Activated CD4-positive, alpha-beta T cell treated with anti-CD3 and anti-CD28 coated beads for 36 hours (primary cell): ENCODE measurements at regions of chr9 and their contacts with region 1.

Region 1: GRCh38 chr9:109119439-109120203 is at the start of gene TMEM245:
- DNase-seq: peak; percentile 97
- ATAC-seq: peak; percentile 91
- H3K4me3 Mint-ChIP-seq: peak within 1 kb of the TSS; percentile 94
- H3K27ac Mint-ChIP-seq: peak within 1 kb of the TSS; percentile 81
- H3K4me1 Mint-ChIP-seq: peaks cover 39% of the 10 kb centered on the region
- H3K27me3 Mint-ChIP-seq: no peaks in the 10 kb centered on the region
- total RNA-seq, gene TMEM245: 24.0 to 24.5 TPM

Region 2: DNA sequence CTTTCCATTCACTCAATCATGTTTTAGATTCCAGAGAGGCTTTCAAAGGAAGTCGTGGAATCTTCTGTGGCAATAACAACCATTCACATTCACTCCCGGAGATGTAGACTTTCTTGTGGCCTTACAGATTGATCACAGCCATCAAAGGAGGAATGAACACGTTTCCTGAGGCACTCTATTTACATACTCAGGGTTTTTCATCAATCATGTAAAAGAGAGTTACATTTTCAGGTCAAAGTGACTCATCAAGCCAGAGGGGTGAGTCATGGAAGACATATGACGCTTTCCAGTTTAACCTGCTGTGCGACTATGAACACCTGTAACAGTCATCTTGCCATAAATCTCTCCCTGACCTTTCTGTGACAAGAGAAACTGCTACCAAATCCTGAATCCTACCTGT is 1875.9 kb before region 1 on chr9:
- CTCF ChIA-PET with region 1: no interaction called
- POLR2A ChIA-PET with region 1: no interaction called
- intact Hi-C with region 1: loop called in 1 of 2 experiments (anchors 5 kb)
- DNase-seq: peak; percentile 74
- ATAC-seq: peak; percentile 92
- H3K4me3 Mint-ChIP-seq: no peak overlapping the region
- H3K27ac Mint-ChIP-seq: peak overlapping the region; percentile 84
- H3K4me1 Mint-ChIP-seq: peaks cover 32% of the 10 kb centered on the region
- H3K27me3 Mint-ChIP-seq: peaks cover 2% of the 10 kb centered on the region

Region 3: DNA sequence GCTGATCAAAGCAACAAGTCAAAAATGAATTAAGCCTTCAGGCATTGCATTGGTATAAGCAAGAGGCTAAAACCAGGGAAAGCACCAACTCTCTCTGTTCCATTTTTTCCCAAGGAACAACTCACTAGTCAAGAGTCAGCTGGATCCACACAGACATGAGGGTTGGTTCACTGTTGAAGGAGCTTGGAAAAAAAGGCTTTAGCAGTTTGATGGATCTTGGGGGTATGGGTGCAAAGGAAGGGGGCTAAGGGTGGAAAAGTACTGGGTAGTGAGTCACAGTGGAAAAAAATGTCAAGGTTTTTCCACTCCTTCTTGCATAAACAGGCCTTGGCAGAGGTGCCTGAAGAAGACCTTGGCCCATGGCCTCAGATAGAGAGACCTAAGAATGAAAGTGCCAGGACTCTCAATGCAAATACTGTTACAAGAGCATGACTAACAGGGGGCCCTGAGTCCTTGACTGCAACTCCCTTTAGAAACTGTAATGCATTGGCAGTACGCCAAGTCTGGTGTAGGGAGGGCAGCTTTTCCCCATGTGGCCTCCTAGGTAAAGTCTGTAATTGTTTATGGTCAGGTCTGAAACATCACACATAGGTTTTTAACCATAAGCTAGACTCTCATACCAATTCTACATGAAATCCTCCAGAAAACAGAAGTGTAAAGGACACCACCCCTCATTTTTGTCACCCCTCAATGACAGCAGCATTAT is 233.8 kb before region 1 on chr9:
- CTCF ChIA-PET with region 1: no interaction called
- POLR2A ChIA-PET with region 1: no interaction called
- intact Hi-C with region 1: loop called in 1 of 2 experiments (anchors 5 kb)
- DNase-seq: peak; percentile 81
- ATAC-seq: peak; percentile 100
- H3K4me3 Mint-ChIP-seq: peak overlapping the region; percentile 50
- H3K27ac Mint-ChIP-seq: peak overlapping the region; percentile 77
- H3K4me1 Mint-ChIP-seq: peaks cover 20% of the 10 kb centered on the region
- H3K27me3 Mint-ChIP-seq: no peaks in the 10 kb centered on the region

Region 4: GRCh38 chr9:109083813-109084405 is 35.7 kb before region 1 on chr9:
- CTCF ChIA-PET with region 1: interaction called, 4 read pairs
- POLR2A ChIA-PET with region 1: no interaction called
- intact Hi-C with region 1: loop called in 1 of 2 experiments (anchors 5 kb)
- DNase-seq: no peak
- ATAC-seq: no peak
- H3K4me3 Mint-ChIP-seq: no peak overlapping the region
- H3K27ac Mint-ChIP-seq: no peak overlapping the region
- H3K4me1 Mint-ChIP-seq: peaks cover 8% of the 10 kb centered on the region
- H3K27me3 Mint-ChIP-seq: no peaks in the 10 kb centered on the region

Region 5: GRCh38 chr9:109182940-109183798 is 63.5 kb after region 1 on chr9:
- CTCF ChIA-PET with region 1: no interaction called
- POLR2A ChIA-PET with region 1: interaction called, 4 read pairs
- intact Hi-C with region 1: loop called (anchors 1 to 5 kb)
- DNase-seq: peak; percentile 48
- ATAC-seq: no peak
- H3K4me3 Mint-ChIP-seq: no peak overlapping the region
- H3K27ac Mint-ChIP-seq: no peak overlapping the region
- H3K4me1 Mint-ChIP-seq: peaks cover 13% of the 10 kb centered on the region
- H3K27me3 Mint-ChIP-seq: peaks cover 14% of the 10 kb centered on the region

Region 6: DNA sequence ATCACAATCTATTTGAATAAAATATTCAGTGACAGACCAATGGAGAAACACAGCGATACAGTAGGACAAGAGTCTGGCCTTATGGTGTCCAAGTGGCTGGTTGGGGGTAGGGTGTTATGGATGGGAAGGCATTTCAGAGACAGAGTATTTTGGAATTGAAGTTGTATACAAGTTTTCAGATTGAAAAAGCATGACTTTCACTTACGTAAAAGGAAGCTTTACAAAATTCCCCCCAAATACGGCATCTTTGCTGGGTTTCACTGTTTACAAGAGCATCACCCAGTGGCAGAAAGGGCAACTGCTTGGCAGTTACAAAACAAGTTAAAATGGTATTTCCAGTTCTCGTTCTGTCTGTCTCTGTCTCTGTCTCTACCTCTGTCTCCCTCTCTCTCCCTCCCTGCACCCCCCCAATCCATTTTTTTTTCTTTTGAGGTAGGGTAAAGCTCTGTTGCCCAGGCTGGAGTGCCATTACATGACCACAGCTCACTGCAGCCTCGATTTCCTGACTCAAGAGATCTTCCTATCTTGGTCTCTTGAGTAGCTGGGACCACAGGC is 292.3 kb after region 1 on chr9:
- CTCF ChIA-PET with region 1: no interaction called
- POLR2A ChIA-PET with region 1: no interaction called
- intact Hi-C with region 1: loop called in 1 of 2 experiments (anchors 5 kb)
- DNase-seq: peak; percentile 66
- ATAC-seq: peak; percentile 57
- H3K4me3 Mint-ChIP-seq: no peak overlapping the region
- H3K27ac Mint-ChIP-seq: peak overlapping the region; percentile 67
- H3K4me1 Mint-ChIP-seq: peaks cover 42% of the 10 kb centered on the region
- H3K27me3 Mint-ChIP-seq: peaks cover 17% of the 10 kb centered on the region